ENCODE measurements at regions of chr4 and their contacts with region 1.

Region 1: GRCh38 chr4:87093443-87094123 is 126.8 kb downstream of the KLHL8 start:
- DNase-seq: peak; percentile 22
- H3K4me3 Mint-ChIP-seq: no peak overlapping the region
- H3K27ac Mint-ChIP-seq: peak overlapping the region; percentile 62
- H3K4me1 Mint-ChIP-seq: peaks cover 25% of the 10 kb centered on the region
- H3K27me3 Mint-ChIP-seq: no peaks in the 10 kb centered on the region

Region 2: DNA sequence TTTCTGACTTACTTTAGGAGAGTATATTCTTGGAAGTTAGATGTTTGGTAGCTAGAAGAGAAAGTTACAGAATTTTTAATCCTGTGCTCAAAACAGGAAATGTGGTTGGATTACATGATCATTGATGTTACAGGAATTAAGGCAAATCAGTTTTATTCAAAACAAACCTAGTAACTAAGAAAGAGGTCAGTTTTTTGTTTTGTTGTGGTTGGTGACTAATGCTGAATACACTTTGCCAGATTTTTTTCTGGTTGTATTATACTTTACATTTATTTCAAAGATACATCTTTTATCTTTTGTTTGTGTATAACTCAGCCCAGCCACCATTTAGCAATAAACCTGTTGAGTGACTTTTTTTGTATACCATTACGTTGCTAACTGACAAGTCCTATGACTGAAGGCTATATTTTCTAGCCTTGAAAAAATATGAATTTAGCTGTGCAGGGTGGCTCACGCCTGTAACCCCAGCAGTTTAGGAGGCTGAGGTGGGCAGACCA is 10.2 kb after region 1 on chr4:
- intact Hi-C with region 1: loop called (anchors 1 kb)
- DNase-seq: no peak
- H3K4me3 Mint-ChIP-seq: peak overlapping the region; percentile 19
- H3K27ac Mint-ChIP-seq: peak overlapping the region; percentile 29
- H3K4me1 Mint-ChIP-seq: peaks cover 19% of the 10 kb centered on the region
- H3K27me3 Mint-ChIP-seq: no peaks in the 10 kb centered on the region

Region 3: DNA sequence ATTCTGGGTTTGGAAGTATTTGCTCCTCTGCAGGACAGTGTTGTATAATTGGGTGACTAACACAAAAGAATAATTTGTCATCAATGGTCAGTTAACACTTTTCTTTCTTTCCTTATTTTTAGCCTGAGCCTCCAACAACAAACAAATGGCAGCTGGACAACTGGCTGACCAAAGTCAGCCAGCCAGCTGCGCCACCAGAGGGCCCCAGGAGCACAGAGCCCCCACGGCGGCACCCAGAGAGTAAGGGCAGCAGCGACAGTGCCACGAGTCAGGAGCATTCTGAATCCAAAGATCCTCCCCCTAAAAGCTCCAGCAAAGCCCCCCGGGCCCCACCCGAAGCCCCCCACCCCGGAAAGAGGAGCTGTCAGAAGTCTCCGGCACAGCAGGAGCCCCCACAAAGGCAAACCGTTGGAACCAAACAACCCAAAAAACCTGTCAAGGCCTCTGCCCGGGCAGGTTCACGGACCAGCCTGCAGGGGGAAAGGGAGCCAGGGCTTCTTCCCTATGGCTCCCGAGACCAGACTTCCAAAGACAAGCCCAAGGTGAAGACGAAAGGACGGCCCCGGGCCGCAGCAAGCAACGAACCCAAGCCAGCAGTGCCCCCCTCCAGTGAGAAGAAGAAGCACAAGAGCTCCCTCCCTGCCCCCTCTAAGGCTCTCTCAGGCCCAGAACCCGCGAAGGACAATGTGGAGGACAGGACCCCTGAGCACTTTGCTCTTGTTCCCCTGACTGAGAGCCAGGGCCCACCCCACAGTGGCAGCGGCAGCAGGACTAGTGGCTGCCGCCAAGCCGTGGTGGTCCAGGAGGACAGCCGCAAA is 20.9 kb after region 1 on chr4:
- intact Hi-C with region 1: no loop called
- DNase-seq: no peak
- H3K4me3 Mint-ChIP-seq: no peak overlapping the region
- H3K27ac Mint-ChIP-seq: no peak overlapping the region
- H3K4me1 Mint-ChIP-seq: no peaks in the 10 kb centered on the region
- H3K27me3 Mint-ChIP-seq: no peaks in the 10 kb centered on the region